ENCODE measurements at regions of chr14 and their contacts with region 1.

Region 1: GRCh38 chr14:100108042-100108825 is 43.0 kb downstream of the EVL start:
- DNase-seq: peak; percentile 77
- H3K4me3 Mint-ChIP-seq: no peak overlapping the region
- H3K27ac Mint-ChIP-seq: peak overlapping the region; percentile 86
- H3K4me1 Mint-ChIP-seq: peaks cover 71% of the 10 kb centered on the region
- H3K27me3 Mint-ChIP-seq: no peaks in the 10 kb centered on the region

Region 2: GRCh38 chr14:100056964-100057795 is 51.1 kb before region 1 on chr14:
- intact Hi-C with region 1: loop called (anchors 1 kb)
- DNase-seq: no peak
- H3K4me3 Mint-ChIP-seq: peak overlapping the region; percentile 19
- H3K27ac Mint-ChIP-seq: peak overlapping the region; percentile 73
- H3K4me1 Mint-ChIP-seq: peaks cover 67% of the 10 kb centered on the region
- H3K27me3 Mint-ChIP-seq: no peaks in the 10 kb centered on the region

Region 3: DNA sequence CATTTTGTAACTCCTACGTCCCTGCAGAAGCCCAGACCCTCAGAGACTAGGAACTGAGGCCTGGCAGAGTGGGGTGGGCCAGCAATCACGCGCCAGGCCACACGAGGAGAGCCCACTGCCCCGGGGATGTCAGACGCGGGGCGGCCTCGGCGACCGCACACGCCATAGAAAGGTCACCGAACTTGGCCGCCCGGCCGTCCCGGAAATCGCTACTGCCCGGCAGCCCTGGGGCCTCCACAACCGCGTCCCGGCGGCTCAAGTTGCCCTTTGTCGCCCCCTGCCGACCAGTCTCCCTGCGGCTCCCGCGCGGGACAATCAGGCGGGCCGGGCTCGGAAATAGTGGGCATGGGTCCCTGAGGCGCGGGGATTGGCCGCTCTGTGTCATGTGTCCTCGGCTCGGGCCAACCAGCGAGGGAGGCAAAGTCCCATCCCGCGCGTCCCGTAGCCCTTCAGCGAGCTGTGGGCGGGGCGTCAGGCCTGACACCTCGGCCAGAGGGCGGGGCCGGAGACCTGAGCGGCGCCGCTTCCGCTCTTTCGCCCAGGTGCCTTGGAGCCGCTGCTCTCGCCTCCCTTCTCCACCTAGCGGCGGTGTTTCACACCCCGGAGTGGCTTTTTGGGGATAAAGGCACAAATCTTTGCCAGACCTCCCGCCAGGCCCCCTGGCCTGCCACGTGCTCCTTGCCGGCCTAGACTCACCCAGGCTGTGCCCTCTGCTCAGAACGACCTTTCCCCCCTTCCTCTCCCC is 84.6 kb after region 1 on chr14:
- intact Hi-C with region 1: loop called (anchors 5 kb)
- DNase-seq: peak; percentile 100
- H3K4me3 Mint-ChIP-seq: peak overlapping the region; percentile 64
- H3K27ac Mint-ChIP-seq: peak overlapping the region; percentile 84
- H3K4me1 Mint-ChIP-seq: peaks cover 9% of the 10 kb centered on the region
- H3K27me3 Mint-ChIP-seq: no peaks in the 10 kb centered on the region

Region 4: GRCh38 chr14:100278702-100279101 is 170.5 kb after region 1 on chr14:
- intact Hi-C with region 1: no loop called
- DNase-seq: no peak
- H3K4me3 Mint-ChIP-seq: no peak overlapping the region
- H3K27ac Mint-ChIP-seq: peak overlapping the region; percentile 12
- H3K4me1 Mint-ChIP-seq: peaks cover 37% of the 10 kb centered on the region
- H3K27me3 Mint-ChIP-seq: no peaks in the 10 kb centered on the region

Measured in activated T-helper 2 cell treated with anti-CD3 and anti-CD28 coated beads, Interferon-gamma antibody, Interleukin-2, Interleukin-4, amounts not matched to agents 10 μg/mL and 5 μg/mL and 100 μg/mL, durations not matched to agents 14 hours and 24 hours and 36 hours (primary cell).